Activated CD4-positive, alpha-beta T cell treated with anti-CD3 and anti-CD28 coated beads for 36 hours (primary cell): ENCODE measurements at regions of chr19 and their contacts with region 1.

Region 1: GRCh38 chr19:10653715-10654492 is at the start of gene ILF3:
- DNase-seq: peak; percentile 100
- ATAC-seq: peak; percentile 82
- H3K4me3 Mint-ChIP-seq: peak within 1 kb of the TSS; percentile 86
- H3K27ac Mint-ChIP-seq: peak within 1 kb of the TSS; percentile 97
- H3K4me1 Mint-ChIP-seq: peaks cover 34% of the 10 kb centered on the region
- H3K27me3 Mint-ChIP-seq: no peaks in the 10 kb centered on the region
- total RNA-seq, gene ILF3: 433 to 570 TPM

Region 2: GRCh38 chr19:9834726-9835506 is 819.0 kb before region 1 on chr19 and contains the start of gene PIN1:
- CTCF ChIA-PET with region 1: no interaction called
- POLR2A ChIA-PET with region 1: no interaction called
- intact Hi-C with region 1: loop called in 1 of 2 experiments (anchors 1 kb)
- DNase-seq: peak; percentile 100
- ATAC-seq: peak; percentile 99
- H3K4me3 Mint-ChIP-seq: peak within 1 kb of the TSS; percentile 86
- H3K27ac Mint-ChIP-seq: peak within 1 kb of the TSS; percentile 88
- H3K4me1 Mint-ChIP-seq: peaks cover 20% of the 10 kb centered on the region
- H3K27me3 Mint-ChIP-seq: no peaks in the 10 kb centered on the region
- total RNA-seq, gene PIN1: 70.4 to 74.2 TPM

Region 3: DNA sequence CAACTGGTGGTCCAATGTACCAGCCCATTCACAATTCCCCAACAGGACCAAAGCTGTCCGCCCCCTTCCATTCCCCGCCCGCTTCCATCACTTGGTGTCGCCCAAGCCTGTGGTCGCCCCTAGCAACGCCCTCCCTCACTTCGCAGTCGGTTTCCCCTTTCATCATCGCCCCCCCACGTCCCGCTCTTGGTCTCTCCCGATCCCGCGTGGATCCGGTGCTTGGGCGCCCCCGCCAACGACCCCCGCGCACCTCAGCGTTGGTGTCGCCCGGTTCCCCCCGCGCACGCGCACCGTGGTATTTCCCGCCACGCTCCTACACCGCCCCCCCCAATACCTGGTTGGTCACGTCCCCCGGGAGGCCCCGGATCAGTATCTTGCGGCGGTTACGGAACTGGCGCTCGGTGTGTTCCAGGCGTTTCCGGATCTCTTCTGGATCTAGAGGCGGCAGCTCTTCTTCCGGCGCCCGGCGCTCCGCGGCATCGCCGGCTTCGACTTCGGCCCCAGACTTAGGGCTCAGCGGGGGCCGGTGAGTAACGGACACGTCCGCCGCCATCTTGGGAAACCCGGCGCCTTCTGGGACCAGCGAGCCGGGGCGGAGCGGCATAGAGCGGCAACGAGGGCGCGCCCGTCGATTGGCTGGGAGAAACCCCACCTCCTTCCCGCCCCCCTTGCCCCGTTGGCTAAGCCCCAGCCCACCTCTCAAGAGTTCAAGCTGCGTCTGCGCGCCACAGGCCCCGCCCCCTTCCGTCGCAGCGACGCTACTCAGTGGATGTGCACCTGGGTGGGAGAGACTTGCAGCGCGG is 320.7 kb before region 1 on chr19 and contains the start of gene RAVER1:
- CTCF ChIA-PET with region 1: no interaction called
- POLR2A ChIA-PET with region 1: no interaction called
- intact Hi-C with region 1: loop called in 1 of 2 experiments (anchors 1 kb)
- DNase-seq: peak; percentile 99
- ATAC-seq: peak; percentile 97
- H3K4me3 Mint-ChIP-seq: peak within 1 kb of the TSS; percentile 97
- H3K27ac Mint-ChIP-seq: peak within 1 kb of the TSS; percentile 96
- H3K4me1 Mint-ChIP-seq: peaks cover 25% of the 10 kb centered on the region
- H3K27me3 Mint-ChIP-seq: no peaks in the 10 kb centered on the region
- total RNA-seq, gene RAVER1: 83.7 to 90.8 TPM

Region 4: DNA sequence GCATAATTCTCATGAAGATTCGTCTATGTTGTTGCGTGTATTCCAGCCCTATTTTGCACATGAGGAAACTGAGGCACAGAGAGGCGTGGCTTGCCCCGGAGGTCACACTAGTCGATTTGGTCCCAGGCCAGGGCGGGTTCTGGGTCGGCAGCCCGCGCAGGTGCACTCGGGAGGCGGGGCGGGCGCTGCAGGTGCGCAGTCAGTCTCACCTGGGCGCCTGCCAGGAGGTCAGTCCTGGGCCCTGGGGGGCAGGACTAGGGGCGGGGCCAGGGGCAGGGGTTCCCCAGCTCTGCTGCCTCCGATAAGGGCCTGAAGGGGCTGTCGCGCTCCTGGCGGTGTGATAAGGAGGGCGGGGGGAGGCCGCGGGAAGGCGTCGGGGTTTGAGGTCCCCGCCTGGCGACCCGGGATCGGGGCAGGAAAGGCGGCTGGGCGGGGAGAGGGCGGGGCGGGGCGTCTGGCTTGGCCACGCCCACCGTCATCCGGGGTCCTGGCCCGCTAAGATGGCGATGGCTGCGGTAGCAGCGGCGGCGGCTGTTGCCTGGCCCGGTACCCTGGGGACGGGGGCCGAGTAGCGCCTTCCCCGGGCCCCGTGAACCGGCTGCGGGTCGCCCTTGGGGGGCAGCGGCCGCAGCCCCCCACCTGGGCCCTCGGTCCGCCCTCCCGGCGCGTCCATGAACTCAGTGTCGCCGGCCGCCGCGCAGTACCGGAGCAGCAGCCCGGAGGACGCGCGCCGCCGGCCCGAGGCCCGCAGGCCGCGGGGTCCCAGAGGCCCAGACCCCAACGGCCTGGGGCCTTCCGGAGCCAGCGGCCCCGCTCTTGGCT is 110.3 kb before region 1 on chr19 and contains the start of gene ATG4D:
- CTCF ChIA-PET with region 1: no interaction called
- POLR2A ChIA-PET with region 1: interaction called, 4 read pairs
- intact Hi-C with region 1: loop called in 1 of 2 experiments (anchors 1 kb)
- DNase-seq: peak; percentile 89
- ATAC-seq: peak; percentile 85
- H3K4me3 Mint-ChIP-seq: peak within 1 kb of the TSS; percentile 85
- H3K27ac Mint-ChIP-seq: peak within 1 kb of the TSS; percentile 84
- H3K4me1 Mint-ChIP-seq: peaks cover 14% of the 10 kb centered on the region
- H3K27me3 Mint-ChIP-seq: peaks cover 8% of the 10 kb centered on the region
- total RNA-seq, gene ATG4D: 18.9 to 19.3 TPM

Region 5: DNA sequence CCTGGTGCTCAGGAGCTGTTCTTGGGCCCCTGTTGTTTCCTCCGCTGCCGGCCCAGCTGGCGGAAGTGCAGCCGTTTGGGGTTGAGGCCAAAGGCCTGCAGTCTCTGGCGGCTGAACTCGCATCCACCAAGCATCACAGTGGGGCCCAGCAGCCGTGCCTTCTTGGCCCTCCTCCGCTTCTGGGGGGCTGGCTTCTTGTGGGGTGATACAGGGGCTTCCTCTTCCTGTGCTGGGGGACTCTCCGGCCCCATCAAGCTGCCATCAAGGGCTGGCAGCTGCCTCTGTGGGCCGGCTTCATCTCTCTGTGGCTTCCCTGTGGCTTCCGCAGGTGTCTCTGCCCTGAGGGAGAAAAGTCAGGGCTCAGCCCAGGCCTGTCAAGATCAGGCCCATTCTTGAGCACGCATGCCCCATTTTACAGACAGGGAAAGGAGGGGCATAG is 99.9 kb before region 1 on chr19:
- CTCF ChIA-PET with region 1: no interaction called
- POLR2A ChIA-PET with region 1: no interaction called
- intact Hi-C with region 1: no loop called
- DNase-seq: peak; percentile 65
- ATAC-seq: peak; percentile 60
- H3K4me3 Mint-ChIP-seq: peak overlapping the region; percentile 33
- H3K27ac Mint-ChIP-seq: peak overlapping the region; percentile 83
- H3K4me1 Mint-ChIP-seq: peaks cover 38% of the 10 kb centered on the region
- H3K27me3 Mint-ChIP-seq: no peaks in the 10 kb centered on the region

Region 6: GRCh38 chr19:10701955-10702525 is 48.1 kb after region 1 on chr19:
- CTCF ChIA-PET with region 1: interaction called, 15 read pairs
- POLR2A ChIA-PET with region 1: interaction called, 3 read pairs
- intact Hi-C with region 1: loop called (anchors 1 to 2 kb)
- DNase-seq: peak; percentile 60
- ATAC-seq: peak; percentile 43
- H3K4me3 Mint-ChIP-seq: peak overlapping the region; percentile 91
- H3K27ac Mint-ChIP-seq: peak overlapping the region; percentile 74
- H3K4me1 Mint-ChIP-seq: peaks cover 10% of the 10 kb centered on the region
- H3K27me3 Mint-ChIP-seq: no peaks in the 10 kb centered on the region

Region 7: DNA sequence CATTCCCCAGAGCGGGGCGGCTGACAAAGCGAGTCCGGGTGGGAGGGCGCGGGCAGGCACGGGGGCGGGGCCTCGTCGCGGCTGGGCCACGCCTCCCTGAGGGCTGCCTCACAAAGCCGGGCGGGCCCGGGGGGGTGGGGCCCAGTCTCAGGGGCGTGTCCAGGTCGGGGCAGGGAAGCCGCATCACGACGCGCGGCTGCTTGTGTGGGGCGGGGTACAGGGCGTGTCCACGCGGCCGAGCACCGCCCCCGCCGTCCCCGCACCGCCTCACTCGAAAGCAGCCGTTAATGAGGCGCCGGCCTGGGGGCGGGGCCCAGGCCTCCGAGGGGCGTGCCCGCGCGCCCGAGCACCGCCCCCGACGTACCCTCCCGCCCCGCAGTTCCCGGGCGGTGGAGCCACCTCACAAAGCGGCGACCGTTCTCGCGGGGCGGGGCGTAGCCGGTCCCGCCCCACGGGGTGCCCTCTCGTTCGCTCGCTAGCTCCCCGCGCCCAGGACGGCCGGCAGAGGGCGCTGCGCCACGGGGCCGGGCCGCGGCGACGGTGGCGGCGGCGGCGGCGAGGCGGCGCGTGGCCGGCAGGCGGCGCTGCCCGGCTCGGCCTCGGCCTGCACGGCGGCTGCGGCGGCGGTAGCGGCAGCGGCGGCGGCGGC is 217.2 kb after region 1 on chr19 and contains the start of gene CARM1:
- CTCF ChIA-PET with region 1: no interaction called
- POLR2A ChIA-PET with region 1: no interaction called
- intact Hi-C with region 1: loop called (anchors 1 kb)
- DNase-seq: peak; percentile 100
- ATAC-seq: peak; percentile 88
- H3K4me3 Mint-ChIP-seq: peak within 1 kb of the TSS; percentile 80
- H3K27ac Mint-ChIP-seq: peak within 1 kb of the TSS; percentile 97
- H3K4me1 Mint-ChIP-seq: peaks cover 28% of the 10 kb centered on the region
- H3K27me3 Mint-ChIP-seq: no peaks in the 10 kb centered on the region
- total RNA-seq, gene CARM1: 82.3 to 96.8 TPM